ENCODE measurements at regions of chr1 and their contacts with region 1.

Region 1: GRCh38 chr1:8026153-8026975 is at the start of gene ERRFI1:
- DNase-seq: peak; percentile 95
- ATAC-seq: peak; percentile 94 to 96
- total RNA-seq, gene ERRFI1: 17.0 to 19.0 TPM

Region 2: GRCh38 chr1:7961216-7962015 is 64.9 kb before region 1 on chr1 and contains the start of gene PARK7:
- intact Hi-C with region 1: no loop called
- DNase-seq: peak; percentile 100
- ATAC-seq: peak; percentile 96 to 97
- total RNA-seq, gene PARK7: 284 to 328 TPM

Region 3: DNA sequence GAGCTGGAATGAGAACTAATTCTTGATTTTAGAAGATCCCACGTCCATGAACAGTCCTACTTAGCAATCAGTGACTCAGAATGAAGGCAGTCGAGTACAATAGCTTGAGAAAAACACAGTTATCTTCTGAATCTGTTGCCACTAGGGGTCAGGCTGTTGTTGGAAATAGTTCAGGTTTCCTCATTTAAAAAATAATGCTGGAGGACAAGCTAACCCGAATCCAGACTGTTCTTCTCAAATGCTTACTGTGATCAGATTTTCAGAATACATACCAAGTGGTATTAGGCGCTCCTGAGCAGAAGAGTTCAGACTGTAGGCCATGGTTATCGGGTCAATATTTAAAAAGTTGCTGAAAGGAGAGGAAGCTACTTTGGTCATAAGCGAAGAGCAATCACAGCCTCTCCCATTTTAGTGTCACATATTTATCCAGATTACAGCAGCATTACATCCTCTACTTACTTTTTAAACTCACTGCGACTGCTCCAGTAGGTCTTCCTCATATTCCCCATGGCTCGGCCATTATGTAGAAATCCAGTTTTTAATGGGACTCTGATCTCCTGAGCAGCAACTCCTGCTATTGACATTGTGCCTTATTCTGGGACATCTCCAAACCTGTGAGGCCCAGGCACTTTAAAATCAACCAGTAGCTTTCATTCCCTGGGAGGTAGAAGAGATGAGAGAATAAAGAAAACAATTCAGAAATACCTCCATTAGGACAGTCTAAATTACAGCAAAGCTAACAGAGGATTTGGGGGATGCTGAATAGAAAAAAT is 11.1 kb before region 1 on chr1:
- intact Hi-C with region 1: no loop called
- DNase-seq: no peak
- ATAC-seq: peak; percentile 75

Region 4: GRCh38 chr1:8222789-8223188 is 196.4 kb after region 1 on chr1:
- intact Hi-C with region 1: no loop called
- DNase-seq: no peak
- ATAC-seq: no peak

Region 5: DNA sequence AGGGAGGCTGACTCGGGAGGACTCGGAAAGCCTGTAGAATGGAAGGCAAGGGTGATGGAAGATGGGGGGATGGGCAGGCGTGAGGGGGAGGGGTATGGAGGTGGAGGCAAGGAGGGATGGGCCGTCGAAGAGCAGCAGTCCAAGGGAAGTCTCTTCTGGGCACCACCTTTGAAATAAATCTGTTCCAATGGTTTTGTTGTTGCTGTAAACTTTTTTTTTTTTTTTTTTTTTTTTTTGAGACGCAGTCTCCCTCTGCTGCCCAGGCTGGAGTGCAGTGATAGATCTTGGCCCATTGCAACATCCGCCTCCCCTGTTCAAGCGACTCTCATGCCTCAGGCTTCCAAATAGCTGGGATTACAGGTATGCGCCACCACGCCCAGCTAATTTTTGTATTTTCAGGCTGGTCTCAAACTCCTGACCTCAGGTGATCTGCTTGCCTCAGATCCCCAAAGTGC is 212.5 kb after region 1 on chr1:
- intact Hi-C with region 1: loop called in 1 of 2 experiments (anchors 10 kb)
- DNase-seq: no peak
- ATAC-seq: peak; percentile 72 to 85

Region 6: GRCh38 chr1:8348777-8349491 is 322.6 kb after region 1 on chr1:
- intact Hi-C with region 1: loop called in 1 of 2 experiments (anchors 10 kb)
- DNase-seq: peak; percentile 74
- ATAC-seq: peak; percentile 55 to 73

Measured in left cardiac atrium (tissue), 4 donors.